GM12878 (cell line): ENCODE measurements at regions of chr9 and their contacts with region 1.

Region 1: GRCh38 chr9:104093647-104094533 is at the start of gene SMC2:
- DNase-seq: peak; percentile 85
- ATAC-seq: peak; percentile 89
- H3K4me3 ChIP-seq: peak within 1 kb of the TSS; percentile 99
- H3K27ac ChIP-seq: peak within 1 kb of the TSS; percentile 98
- H3K4me1 ChIP-seq: peaks cover 22% of the 10 kb centered on the region
- H3K27me3 ChIP-seq: no peaks in the 10 kb centered on the region
- CTCF ChIP-seq: no peak
- EP300 ChIP-seq: no peak
- POLR2A ChIP-seq: peak; percentile 89
- RAD21 ChIP-seq: no peak
- polyA plus RNA-seq, gene SMC2: 51.0 to 82.7 TPM

Region 2: GRCh38 chr9:103502015-103502414 is 591.9 kb before region 1 on chr9:
- CTCF ChIA-PET with region 1: no interaction called
- POLR2A ChIA-PET with region 1: no interaction called
- RAD21 ChIA-PET with region 1: no interaction called
- SMC1A ChIA-PET with region 1: no interaction called
- in situ Hi-C with region 1: no loop called
- intact Hi-C with region 1: no loop called
- DNase-seq: no peak
- ATAC-seq: no peak
- H3K4me3 ChIP-seq: no peak overlapping the region
- H3K27ac ChIP-seq: no peak overlapping the region
- H3K4me1 ChIP-seq: no peaks in the 10 kb centered on the region
- H3K27me3 ChIP-seq: no peaks in the 10 kb centered on the region
- CTCF ChIP-seq: no peak
- EP300 ChIP-seq: no peak
- POLR2A ChIP-seq: no peak
- RAD21 ChIP-seq: no peak

Region 3: GRCh38 chr9:103789686-103790085 is 304.2 kb before region 1 on chr9:
- CTCF ChIA-PET with region 1: interaction called, 4 read pairs
- POLR2A ChIA-PET with region 1: no interaction called
- RAD21 ChIA-PET with region 1: interaction called, 4 read pairs
- SMC1A ChIA-PET with region 1: interaction called, 4 read pairs
- in situ Hi-C with region 1: no loop called
- intact Hi-C with region 1: loop called (anchors 5 kb)
- DNase-seq: no peak
- ATAC-seq: peak; percentile 87
- H3K4me3 ChIP-seq: no peak overlapping the region
- H3K27ac ChIP-seq: no peak overlapping the region
- H3K4me1 ChIP-seq: no peaks in the 10 kb centered on the region
- H3K27me3 ChIP-seq: no peaks in the 10 kb centered on the region
- CTCF ChIP-seq: peak; percentile 44 to 49 (median 44); a peak in 5 of 6 replicates
- EP300 ChIP-seq: no peak
- POLR2A ChIP-seq: no peak
- RAD21 ChIP-seq: peak; percentile 76

Region 4: GRCh38 chr9:104118916-104119315 is 25.0 kb after region 1 on chr9:
- CTCF ChIA-PET with region 1: interaction called, 10 read pairs
- POLR2A ChIA-PET with region 1: interaction called, 6 read pairs
- RAD21 ChIA-PET with region 1: no interaction called
- SMC1A ChIA-PET with region 1: interaction called, 11 read pairs
- in situ Hi-C with region 1: no loop called
- intact Hi-C with region 1: no loop called
- DNase-seq: no peak
- ATAC-seq: no peak
- H3K4me3 ChIP-seq: no peak overlapping the region
- H3K27ac ChIP-seq: no peak overlapping the region
- H3K4me1 ChIP-seq: no peaks in the 10 kb centered on the region
- H3K27me3 ChIP-seq: no peaks in the 10 kb centered on the region
- CTCF ChIP-seq: no peak
- EP300 ChIP-seq: no peak
- POLR2A ChIP-seq: no peak
- RAD21 ChIP-seq: no peak

Region 5: GRCh38 chr9:104301755-104302154 is 207.9 kb after region 1 on chr9:
- CTCF ChIA-PET with region 1: no interaction called
- POLR2A ChIA-PET with region 1: no interaction called
- RAD21 ChIA-PET with region 1: no interaction called
- SMC1A ChIA-PET with region 1: no interaction called
- in situ Hi-C with region 1: no loop called
- intact Hi-C with region 1: no loop called
- DNase-seq: no peak
- ATAC-seq: no peak
- H3K4me3 ChIP-seq: no peak overlapping the region
- H3K27ac ChIP-seq: no peak overlapping the region
- H3K4me1 ChIP-seq: no peaks in the 10 kb centered on the region
- H3K27me3 ChIP-seq: no peaks in the 10 kb centered on the region
- CTCF ChIP-seq: no peak
- EP300 ChIP-seq: no peak
- POLR2A ChIP-seq: no peak
- RAD21 ChIP-seq: no peak

Region 6: GRCh38 chr9:105064315-105065097 is 970.6 kb after region 1 on chr9:
- CTCF ChIA-PET with region 1: no interaction called
- POLR2A ChIA-PET with region 1: no interaction called
- RAD21 ChIA-PET with region 1: no interaction called
- SMC1A ChIA-PET with region 1: no interaction called
- in situ Hi-C with region 1: no loop called
- intact Hi-C with region 1: no loop called
- DNase-seq: no peak
- ATAC-seq: peak; percentile 21; the same call in 1 of the 3 replicates
- H3K4me3 ChIP-seq: no peak overlapping the region
- H3K27ac ChIP-seq: no peak overlapping the region
- H3K4me1 ChIP-seq: peaks cover 11% of the 10 kb centered on the region
- H3K27me3 ChIP-seq: no peaks in the 10 kb centered on the region
- CTCF ChIP-seq: no peak
- EP300 ChIP-seq: no peak
- POLR2A ChIP-seq: no peak
- RAD21 ChIP-seq: no peak